Psoas muscle (tissue), 8 donors: ENCODE measurements at regions of chr2 and their contacts with region 1.

Region 1: GRCh38 chr2:10302479-10303180 is at the start of gene HPCAL1:
- DNase-seq: peak; percentile 88 to 90
- ATAC-seq: peak; percentile 88 to 93 (median 92)
- H3K4me3 ChIP-seq: peak within 1 kb of the TSS; percentile 76
- H3K27ac ChIP-seq: peak within 1 kb of the TSS; percentile 68
- H3K4me1 ChIP-seq: no peaks in the 10 kb centered on the region
- H3K27me3 ChIP-seq: peaks cover 0 to 4% (median 0%) of the 10 kb centered on the region in 3 donors
- CTCF ChIP-seq: peak; percentile 47
- total RNA-seq, gene HPCAL1: 16.1 to 101 (median 25.9) TPM

Region 2: GRCh38 chr2:10141736-10142642 is 160.6 kb before region 1 on chr2:
- intact Hi-C with region 1: loop called in 1 of 2 experiments (anchors 10 kb)
- DNase-seq: no peak
- ATAC-seq: peak; percentile 54 to 80 (median 65)
- H3K4me3 ChIP-seq: no peak overlapping the region
- H3K27ac ChIP-seq: no peak overlapping the region
- H3K4me1 ChIP-seq: no peaks in the 10 kb centered on the region
- H3K27me3 ChIP-seq: no peaks in the 10 kb centered on the region
- CTCF ChIP-seq: peak; percentile 28

Region 3: DNA sequence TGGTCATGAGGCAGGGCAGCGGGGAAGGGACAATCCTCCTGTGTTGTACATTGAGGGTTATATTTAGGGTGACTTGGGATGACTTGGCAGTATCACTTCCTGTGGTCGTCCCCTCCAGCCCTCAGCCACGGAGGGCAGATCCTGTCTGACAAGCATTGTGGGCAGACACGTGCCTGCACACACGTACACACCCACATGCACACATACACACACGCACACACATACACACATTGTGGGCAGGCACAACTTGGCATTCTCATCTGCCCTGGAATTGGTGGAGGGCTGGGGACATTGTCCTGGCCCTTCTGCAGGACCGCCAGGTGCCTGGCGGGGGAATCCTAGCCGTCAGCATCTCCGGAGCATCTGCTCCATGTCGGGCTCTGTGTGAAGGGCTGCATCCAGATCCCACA is 97.9 kb after region 1 on chr2:
- intact Hi-C with region 1: loop called in 1 of 2 experiments (anchors 5 kb)
- DNase-seq: no peak
- ATAC-seq: no peak
- H3K4me3 ChIP-seq: no peak overlapping the region
- H3K27ac ChIP-seq: peak overlapping the region; percentile 32
- H3K4me1 ChIP-seq: peaks cover 17% of the 10 kb centered on the region
- H3K27me3 ChIP-seq: no peaks in the 10 kb centered on the region
- CTCF ChIP-seq: no peak

Region 4: GRCh38 chr2:10408649-10409579 is 106.3 kb after region 1 on chr2:
- intact Hi-C with region 1: loop called (anchors 2 to 5 kb)
- DNase-seq: peak; percentile 74 to 86
- ATAC-seq: peak; percentile 49 to 66 (median 58)
- H3K4me3 ChIP-seq: no peak overlapping the region
- H3K27ac ChIP-seq: peak overlapping the region; percentile 14
- H3K4me1 ChIP-seq: peaks cover 49% of the 10 kb centered on the region
- H3K27me3 ChIP-seq: no peaks in the 10 kb centered on the region
- CTCF ChIP-seq: peak; percentile 96

Region 5: DNA sequence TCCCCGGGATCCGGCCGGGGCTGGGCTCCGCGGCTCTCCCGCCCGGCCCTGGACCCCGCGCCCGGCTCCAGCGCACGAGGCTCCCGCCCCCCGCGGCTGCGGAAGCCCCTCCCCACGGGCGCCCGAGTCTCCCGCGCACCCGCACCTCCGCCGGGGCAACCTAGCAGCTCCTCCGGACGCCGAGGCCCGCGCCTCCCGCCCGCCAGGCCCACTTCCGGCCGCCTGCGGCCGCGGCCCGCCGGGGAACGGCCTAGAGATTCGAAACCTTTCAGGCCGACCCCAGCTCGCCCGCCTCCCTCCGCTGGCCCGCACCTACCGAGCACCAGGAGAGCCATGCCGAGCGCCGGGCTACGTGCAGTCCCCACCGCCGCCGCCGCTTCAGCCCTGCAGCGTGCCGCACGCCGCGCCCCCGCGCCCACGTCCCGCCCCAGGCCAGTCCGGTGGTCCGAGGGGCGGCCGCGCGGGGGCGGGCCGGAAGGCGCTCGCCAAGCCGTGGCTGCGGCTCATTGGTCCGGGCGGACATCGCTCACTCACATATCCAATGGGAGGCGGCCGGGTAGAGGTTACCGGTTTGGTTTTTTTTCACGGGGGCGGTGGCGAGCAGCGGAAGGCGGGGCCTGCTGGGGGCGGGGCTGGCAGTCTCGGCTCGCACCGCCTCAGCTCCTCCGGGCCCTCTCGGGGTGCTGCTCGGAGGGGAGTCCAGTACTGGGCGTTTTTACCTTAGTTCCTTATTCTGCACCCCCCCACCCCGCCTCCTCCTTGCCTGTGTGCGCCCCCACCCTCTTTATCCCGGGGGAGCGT is 509.9 kb after region 1 on chr2 and contains the start of gene PDIA6:
- intact Hi-C with region 1: no loop called
- DNase-seq: peak; percentile 98 to 99
- ATAC-seq: peak; percentile 98 to 99 (median 99)
- H3K4me3 ChIP-seq: peak within 1 kb of the TSS; percentile 90
- H3K27ac ChIP-seq: peak within 1 kb of the TSS; percentile 95
- H3K4me1 ChIP-seq: peaks cover 18% of the 10 kb centered on the region
- H3K27me3 ChIP-seq: no peaks in the 10 kb centered on the region
- CTCF ChIP-seq: peak; percentile 6
- total RNA-seq, gene PDIA6: 40.1 to 61.7 (median 51.7) TPM